K562 (cell line): ENCODE measurements at regions of chr1 and their contacts with region 1.

Region 1: GRCh38 chr1:8571200-8571984 is 246.0 kb downstream of the RERE start:
- DNase-seq: peak in 1 of 4 experiments; percentile 21
- ATAC-seq: peak; percentile 39
- H3K4me3 ChIP-seq: no peak overlapping the region
- H3K27ac ChIP-seq: peak overlapping the region; percentile 10; the same call in 1 of the 3 replicates
- H3K4me1 ChIP-seq: peaks cover 0 to 19% of the 10 kb centered on the region in 2 experiments; a peak in 3 of 5 replicates
- H3K27me3 ChIP-seq: no peaks in the 10 kb centered on the region
- CTCF ChIP-seq: peak; percentile 11 to 44 (median 21); a peak in 3 of 6 replicates
- EP300 ChIP-seq: no peak; the same call in 1 of the 2 replicates
- POLR2A ChIP-seq: no peak
- RAD21 ChIP-seq: peak in 1 of 2 experiments; percentile 17; a peak in 1 of 4 replicates

Region 2: DNA sequence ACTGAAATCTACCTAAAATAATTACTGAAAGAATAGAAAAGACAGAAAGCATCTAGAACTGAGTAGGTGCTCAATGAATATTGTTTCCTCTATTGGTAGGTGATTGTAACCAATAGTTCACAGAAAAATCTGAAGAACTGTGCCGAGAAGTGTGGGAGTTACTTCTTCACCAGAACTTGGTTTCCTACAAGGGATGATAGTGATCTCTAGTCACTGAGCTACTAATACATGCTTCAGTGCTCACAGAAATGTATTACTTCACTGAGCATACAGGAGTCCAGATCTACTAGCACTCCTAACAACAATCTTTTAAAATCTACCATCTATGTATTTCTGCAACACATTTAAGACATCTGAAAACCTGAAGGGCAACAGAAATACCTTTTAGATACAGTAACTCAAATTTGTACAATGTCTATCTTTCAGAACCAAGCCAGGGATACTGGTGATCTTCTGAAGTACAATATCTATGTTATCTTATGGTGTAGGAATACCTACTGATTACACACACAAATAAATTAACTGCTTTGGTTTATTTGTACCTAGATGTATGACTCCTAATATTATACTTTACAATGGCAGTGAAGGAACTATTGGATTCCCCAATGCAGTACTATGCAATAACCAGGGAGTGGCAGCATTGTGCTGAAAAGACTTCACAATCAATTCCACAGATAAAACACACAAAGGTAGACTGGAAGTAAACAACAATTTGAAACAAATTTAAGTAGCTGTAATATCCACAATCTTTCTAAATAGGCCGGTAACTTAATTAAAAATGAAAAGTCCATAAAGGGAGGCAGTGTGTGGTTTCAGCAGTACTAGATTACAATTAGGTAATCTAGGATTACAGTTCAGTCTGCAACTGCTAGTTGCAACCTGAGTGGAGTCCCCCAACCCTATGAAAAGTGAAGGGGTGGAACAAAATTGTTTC is 10.5 kb before region 1 on chr1:
- CTCF ChIA-PET with region 1: no interaction called
- POLR2A ChIA-PET with region 1: interaction called, 11 read pairs
- in situ Hi-C with region 1: no loop called
- intact Hi-C with region 1: no loop called
- DNase-seq: peak; percentile 52 to 69 (median 55)
- ATAC-seq: peak; percentile 80
- H3K4me3 ChIP-seq: no peak overlapping the region
- H3K27ac ChIP-seq: no peak overlapping the region
- H3K4me1 ChIP-seq: peaks cover 0 to 19% of the 10 kb centered on the region in 2 experiments; a peak in 4 of 5 replicates
- H3K27me3 ChIP-seq: no peaks in the 10 kb centered on the region
- CTCF ChIP-seq: peak; percentile 72 to 98 (median 88)
- EP300 ChIP-seq: 0 out of 2 replicates have a peak, but pooled peaks have one; percentile 2
- POLR2A ChIP-seq: no peak
- RAD21 ChIP-seq: peak; percentile 96 to 99

Region 3: DNA sequence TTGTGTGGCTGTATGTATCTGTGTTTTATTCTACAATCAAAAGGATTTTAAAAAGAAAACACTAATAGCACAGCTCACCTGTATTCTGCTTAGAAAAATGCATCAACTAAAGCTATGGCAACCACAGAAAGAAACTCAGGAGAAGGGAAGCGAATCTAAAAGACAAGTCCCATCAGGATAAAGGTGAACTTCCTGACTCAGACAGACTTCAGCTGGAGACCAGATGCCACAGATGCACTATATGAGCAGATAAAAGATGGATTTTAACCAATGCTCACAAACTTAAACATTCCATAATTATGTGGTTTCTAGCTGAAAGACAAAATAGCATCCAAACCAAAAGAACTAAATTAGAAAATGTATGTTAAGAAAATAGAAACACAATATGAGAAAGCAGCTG is 15.0 kb after region 1 on chr1:
- CTCF ChIA-PET with region 1: no interaction called
- POLR2A ChIA-PET with region 1: interaction called, 10 read pairs
- in situ Hi-C with region 1: no loop called
- intact Hi-C with region 1: no loop called
- DNase-seq: no peak
- ATAC-seq: no peak
- H3K4me3 ChIP-seq: no peak overlapping the region
- H3K27ac ChIP-seq: no peak overlapping the region
- H3K4me1 ChIP-seq: peaks cover 0 to 6% of the 10 kb centered on the region in 2 experiments; a peak in 3 of 5 replicates
- H3K27me3 ChIP-seq: no peaks in the 10 kb centered on the region
- CTCF ChIP-seq: no peak
- EP300 ChIP-seq: no peak
- POLR2A ChIP-seq: no peak
- RAD21 ChIP-seq: no peak

Region 4: GRCh38 chr1:8671306-8671917 is 100.0 kb after region 1 on chr1:
- CTCF ChIA-PET with region 1: no interaction called
- POLR2A ChIA-PET with region 1: no interaction called
- in situ Hi-C with region 1: loop called (anchors 5 kb)
- intact Hi-C with region 1: no loop called
- DNase-seq: peak; percentile 69 to 76 (median 74)
- ATAC-seq: peak; percentile 86
- H3K4me3 ChIP-seq: no peak overlapping the region
- H3K27ac ChIP-seq: no peak overlapping the region
- H3K4me1 ChIP-seq: peaks cover 0 to 27% of the 10 kb centered on the region in 2 experiments; a peak in 2 of 5 replicates
- H3K27me3 ChIP-seq: no peaks in the 10 kb centered on the region
- CTCF ChIP-seq: peak; percentile 81 to 93 (median 89)
- EP300 ChIP-seq: no peak
- POLR2A ChIP-seq: no peak
- RAD21 ChIP-seq: peak; percentile 81 to 95

Region 5: DNA sequence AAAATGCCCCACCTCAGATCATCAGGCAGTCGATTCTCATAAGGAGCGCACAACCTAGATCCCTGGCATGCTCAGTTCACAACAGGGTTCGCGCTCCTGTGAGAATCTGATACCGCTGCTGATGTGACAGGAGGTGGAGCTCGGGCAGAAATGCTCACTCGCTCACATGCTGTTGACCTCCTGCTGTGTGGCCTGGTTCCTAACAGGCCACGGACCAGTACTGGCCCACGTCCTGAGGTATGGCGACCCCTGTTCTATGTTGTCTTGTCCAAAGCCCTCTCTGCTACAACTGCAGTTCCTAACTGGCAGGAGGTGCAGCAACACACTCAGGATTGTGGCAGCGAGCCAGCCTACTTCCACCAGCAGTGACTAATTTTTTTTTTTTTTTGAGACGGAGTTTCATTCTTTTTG is 1181.7 kb after region 1 on chr1:
- CTCF ChIA-PET with region 1: no interaction called
- POLR2A ChIA-PET with region 1: no interaction called
- in situ Hi-C with region 1: loop called (anchors 10 kb)
- intact Hi-C with region 1: no loop called
- DNase-seq: peak in 2 of 4 experiments; percentile 30 to 71
- ATAC-seq: peak; percentile 90
- H3K4me3 ChIP-seq: no peak overlapping the region
- H3K27ac ChIP-seq: 0 out of 3 replicates have a peak overlapping the region, but pooled peaks have one; percentile 19
- H3K4me1 ChIP-seq: peaks cover 7 to 8% of the 10 kb centered on the region in 2 experiments; a peak in 3 of 5 replicates
- H3K27me3 ChIP-seq: no peaks in the 10 kb centered on the region
- CTCF ChIP-seq: no peak
- EP300 ChIP-seq: no peak
- POLR2A ChIP-seq: no peak
- RAD21 ChIP-seq: no peak